HEK293 (cell line): ENCODE measurements at regions of chr14 and their contacts with region 1.

Region 1: DNA sequence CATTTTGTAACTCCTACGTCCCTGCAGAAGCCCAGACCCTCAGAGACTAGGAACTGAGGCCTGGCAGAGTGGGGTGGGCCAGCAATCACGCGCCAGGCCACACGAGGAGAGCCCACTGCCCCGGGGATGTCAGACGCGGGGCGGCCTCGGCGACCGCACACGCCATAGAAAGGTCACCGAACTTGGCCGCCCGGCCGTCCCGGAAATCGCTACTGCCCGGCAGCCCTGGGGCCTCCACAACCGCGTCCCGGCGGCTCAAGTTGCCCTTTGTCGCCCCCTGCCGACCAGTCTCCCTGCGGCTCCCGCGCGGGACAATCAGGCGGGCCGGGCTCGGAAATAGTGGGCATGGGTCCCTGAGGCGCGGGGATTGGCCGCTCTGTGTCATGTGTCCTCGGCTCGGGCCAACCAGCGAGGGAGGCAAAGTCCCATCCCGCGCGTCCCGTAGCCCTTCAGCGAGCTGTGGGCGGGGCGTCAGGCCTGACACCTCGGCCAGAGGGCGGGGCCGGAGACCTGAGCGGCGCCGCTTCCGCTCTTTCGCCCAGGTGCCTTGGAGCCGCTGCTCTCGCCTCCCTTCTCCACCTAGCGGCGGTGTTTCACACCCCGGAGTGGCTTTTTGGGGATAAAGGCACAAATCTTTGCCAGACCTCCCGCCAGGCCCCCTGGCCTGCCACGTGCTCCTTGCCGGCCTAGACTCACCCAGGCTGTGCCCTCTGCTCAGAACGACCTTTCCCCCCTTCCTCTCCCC is 33.4 kb upstream of the DEGS2 start:
- H3K4me3 ChIP-seq: peak overlapping the region; percentile 38
- H3K27ac ChIP-seq: peak overlapping the region; percentile 82
- H3K4me1 ChIP-seq: peaks cover 8% of the 10 kb centered on the region
- CTCF ChIP-seq: peak; percentile 97

Region 2: GRCh38 chr14:99961826-99962666 is 230.8 kb before region 1 on chr14:
- CTCF ChIA-PET with region 1: no interaction called
- POLR2A ChIA-PET with region 1: no interaction called
- H3K4me3 ChIP-seq: no peak overlapping the region
- H3K27ac ChIP-seq: no peak overlapping the region
- H3K4me1 ChIP-seq: no peaks in the 10 kb centered on the region
- CTCF ChIP-seq: no peak

Region 3: DNA sequence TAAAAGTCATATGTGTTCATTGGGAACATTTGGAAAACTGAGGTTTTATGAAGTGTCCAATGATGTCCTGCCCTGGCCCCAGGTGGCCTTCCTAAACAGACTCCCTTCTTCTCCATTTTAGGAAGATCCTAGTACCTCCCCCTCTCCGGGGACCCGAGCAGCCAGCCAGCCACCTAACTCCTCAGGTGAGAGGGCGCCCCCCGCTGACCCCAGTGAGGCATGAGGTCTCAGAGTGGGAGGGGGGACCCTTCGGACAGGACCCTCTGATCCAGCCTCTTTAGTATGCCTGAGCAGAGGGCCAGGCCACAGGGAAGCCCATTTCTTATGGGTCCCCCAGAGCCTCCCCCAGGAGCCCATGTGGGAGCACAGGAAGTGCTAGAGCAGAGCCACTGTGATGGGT is 57.1 kb before region 1 on chr14:
- CTCF ChIA-PET with region 1: no interaction called
- POLR2A ChIA-PET with region 1: no interaction called
- H3K4me3 ChIP-seq: no peak overlapping the region
- H3K27ac ChIP-seq: no peak overlapping the region
- H3K4me1 ChIP-seq: no peaks in the 10 kb centered on the region
- CTCF ChIP-seq: no peak

Region 4: GRCh38 chr14:100155042-100155846 is 37.6 kb before region 1 on chr14:
- CTCF ChIA-PET with region 1: interaction called, 21 read pairs
- POLR2A ChIA-PET with region 1: no interaction called
- H3K4me3 ChIP-seq: no peak overlapping the region
- H3K27ac ChIP-seq: no peak overlapping the region
- H3K4me1 ChIP-seq: 0 out of 2 replicates have a peak, but pooled peaks cover 2% of the 10 kb centered on the region
- CTCF ChIP-seq: peak; percentile 88

Region 5: DNA sequence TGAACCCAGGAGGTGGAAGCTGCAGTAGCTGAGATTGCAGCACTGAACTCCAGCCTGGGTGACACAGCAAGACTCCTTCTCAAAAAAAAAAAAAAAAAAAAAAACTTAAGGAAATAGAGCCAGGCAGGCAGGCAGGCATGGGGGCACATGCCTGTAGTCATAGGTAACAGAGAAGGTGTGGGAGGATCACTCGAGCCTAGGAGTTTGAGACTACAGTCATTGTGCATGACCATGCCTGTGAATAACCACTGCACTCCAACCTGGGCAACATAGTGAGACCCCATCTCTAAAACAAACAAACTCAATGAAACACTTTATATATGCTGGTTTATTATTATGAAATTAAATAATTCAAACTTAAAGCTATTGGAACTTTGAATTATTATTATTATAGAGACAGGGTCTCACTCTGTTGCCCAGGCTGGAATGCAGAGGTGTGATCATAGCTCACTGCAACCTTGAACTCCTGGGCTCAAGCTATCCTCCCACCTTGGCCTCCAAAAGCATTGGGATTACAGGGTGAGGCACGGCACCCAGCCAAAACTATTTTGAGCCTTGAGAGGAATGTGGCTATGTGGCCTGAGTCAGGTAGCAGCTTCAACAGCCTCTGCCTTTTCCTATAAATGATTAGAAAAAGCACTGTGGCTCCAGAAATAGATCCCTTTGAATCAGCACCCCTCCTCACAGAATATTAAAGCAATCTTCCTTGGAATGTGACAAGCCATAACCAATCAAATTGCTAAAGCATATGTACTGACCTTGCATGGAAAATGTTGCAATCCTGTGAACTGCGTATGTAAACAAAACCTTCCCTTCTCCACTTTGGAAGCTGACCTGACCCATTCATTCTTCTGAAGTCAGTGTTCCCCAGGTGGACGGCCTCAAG is 11.3 kb after region 1 on chr14:
- CTCF ChIA-PET with region 1: interaction called, 32 read pairs
- POLR2A ChIA-PET with region 1: no interaction called
- H3K4me3 ChIP-seq: no peak overlapping the region
- H3K27ac ChIP-seq: no peak overlapping the region
- H3K4me1 ChIP-seq: no peaks in the 10 kb centered on the region
- CTCF ChIP-seq: no peak

Region 6: DNA sequence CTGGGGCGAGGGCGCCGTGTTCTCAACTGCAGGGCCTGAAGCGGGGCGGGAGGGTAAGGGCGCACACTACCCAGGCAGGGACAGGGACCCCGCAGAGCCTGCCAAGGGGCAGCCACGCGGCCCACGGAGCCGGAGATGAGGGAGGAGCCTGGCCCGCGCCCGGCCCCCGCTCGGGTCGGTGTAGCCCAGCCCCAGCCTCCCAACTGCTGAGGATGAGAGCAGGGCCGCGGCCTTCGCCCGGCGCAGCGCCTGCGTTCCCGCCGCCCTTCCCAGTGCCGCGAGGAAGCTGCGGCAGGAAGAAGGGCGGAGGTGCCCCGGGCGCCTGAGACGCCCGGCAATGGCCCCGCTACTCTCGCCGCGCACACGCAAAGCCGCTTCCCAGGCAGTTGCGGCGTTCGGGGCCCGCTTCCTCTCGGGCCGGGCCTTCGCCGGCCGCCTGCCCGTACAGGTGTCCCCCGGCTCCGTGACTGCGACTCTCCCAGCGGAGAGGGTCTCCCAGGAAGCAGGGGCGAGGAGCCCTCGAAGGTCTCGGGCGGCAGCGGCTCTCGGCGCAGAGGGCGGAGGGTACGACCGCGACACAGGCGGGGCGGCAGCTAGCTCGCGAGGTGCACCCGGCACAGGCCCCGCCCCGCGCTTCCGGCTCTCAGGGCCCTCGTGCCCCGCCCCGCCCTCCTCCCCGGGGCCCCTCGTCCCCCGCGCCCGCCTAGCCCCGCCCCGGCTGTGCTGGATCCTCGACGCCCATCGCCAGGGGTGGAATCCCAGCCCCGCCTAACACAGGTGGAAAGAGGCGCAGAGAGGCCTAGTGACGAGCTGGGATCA is 21.3 kb after region 1 on chr14:
- CTCF ChIA-PET with region 1: interaction called, 12 read pairs
- POLR2A ChIA-PET with region 1: interaction called, 10 read pairs
- H3K4me3 ChIP-seq: peak overlapping the region; percentile 74
- H3K27ac ChIP-seq: peak overlapping the region; percentile 89
- H3K4me1 ChIP-seq: peaks cover 4% of the 10 kb centered on the region; the same call in 1 of the 2 replicates
- CTCF ChIP-seq: no peak

Region 7: DNA sequence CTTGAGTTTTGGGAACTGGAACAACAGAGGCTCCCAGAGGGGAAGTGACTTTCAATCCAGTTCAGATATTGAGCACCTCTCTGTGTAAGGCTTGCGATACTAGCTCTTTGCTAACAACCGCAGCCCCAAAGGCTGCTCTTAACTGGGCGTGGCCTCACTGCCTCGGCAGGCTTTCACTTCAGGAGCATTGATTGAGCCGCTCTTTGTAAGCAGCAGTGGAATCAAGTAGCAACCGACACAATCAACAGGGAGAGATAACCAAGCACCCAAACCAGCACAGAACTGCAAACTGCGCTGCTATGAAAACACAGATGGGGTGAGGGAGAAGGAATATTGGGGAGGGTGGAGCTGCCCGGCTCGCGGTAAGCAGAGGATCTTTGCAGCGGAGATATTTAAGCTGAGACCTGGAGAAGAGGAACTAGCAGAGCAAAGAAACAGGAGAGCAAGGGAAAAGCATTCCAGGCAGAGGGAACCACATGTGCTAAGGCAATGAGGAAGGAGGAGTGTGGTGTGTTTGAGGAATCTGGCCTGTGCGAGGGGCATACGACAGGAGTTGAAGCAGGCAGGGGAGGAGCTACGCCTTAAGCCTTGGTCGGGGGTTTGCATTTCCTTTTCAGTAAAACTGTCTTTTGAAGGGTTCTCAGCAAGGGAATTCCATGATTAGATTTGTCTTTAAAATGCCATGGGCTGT is 28.8 kb after region 1 on chr14:
- CTCF ChIA-PET with region 1: interaction called, 13 read pairs
- POLR2A ChIA-PET with region 1: interaction called, 3 read pairs
- H3K4me3 ChIP-seq: peak overlapping the region; percentile 13; the same call in 1 of the 2 replicates
- H3K27ac ChIP-seq: no peak overlapping the region
- H3K4me1 ChIP-seq: peaks cover 8% of the 10 kb centered on the region
- CTCF ChIP-seq: no peak

Region 8: GRCh38 chr14:100246826-100247428 is 54.1 kb after region 1 on chr14:
- CTCF ChIA-PET with region 1: interaction called, 11 read pairs
- POLR2A ChIA-PET with region 1: no interaction called
- H3K4me3 ChIP-seq: no peak overlapping the region
- H3K27ac ChIP-seq: no peak overlapping the region
- H3K4me1 ChIP-seq: peaks cover 26% of the 10 kb centered on the region
- CTCF ChIP-seq: peak; percentile 57

Region 9: GRCh38 chr14:100375963-100376735 is 183.3 kb after region 1 on chr14:
- CTCF ChIA-PET with region 1: no interaction called
- POLR2A ChIA-PET with region 1: no interaction called
- H3K4me3 ChIP-seq: peak within 1 kb of the TSS; percentile 88
- H3K27ac ChIP-seq: peak within 1 kb of the TSS; percentile 90
- H3K4me1 ChIP-seq: peaks cover 4% of the 10 kb centered on the region; the same call in 1 of the 2 replicates
- CTCF ChIP-seq: no peak

Region 10: DNA sequence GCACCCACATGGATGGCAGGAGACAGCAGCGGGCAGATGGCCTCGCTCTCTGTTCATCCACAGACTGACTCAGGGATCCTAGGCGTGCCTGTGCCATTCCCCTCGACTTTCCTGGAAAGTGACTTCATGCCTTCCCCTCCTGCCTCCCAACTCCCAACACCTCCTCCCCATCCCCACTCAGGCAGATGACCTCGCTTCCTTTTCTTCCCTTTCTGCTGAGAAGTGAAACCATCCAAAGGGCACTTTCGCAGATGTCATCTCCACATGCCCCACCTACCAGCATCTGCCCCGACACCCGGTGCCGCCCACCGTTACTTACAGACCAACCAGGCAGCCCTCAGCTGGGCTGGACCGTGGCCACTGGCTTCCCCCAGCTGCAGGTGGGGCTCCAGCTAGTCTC is 364.8 kb after region 1 on chr14:
- CTCF ChIA-PET with region 1: no interaction called
- POLR2A ChIA-PET with region 1: no interaction called
- H3K4me3 ChIP-seq: no peak overlapping the region
- H3K27ac ChIP-seq: no peak overlapping the region
- H3K4me1 ChIP-seq: no peaks in the 10 kb centered on the region
- CTCF ChIP-seq: no peak